ENCODE measurements at regions of chr16 and their contacts with region 1.

Region 1: GRCh38 chr16:21554795-21555585 is 44.4 kb upstream of the METTL9 start:
- DNase-seq: peak; percentile 68 to 93
- H3K4me3 ChIP-seq: peak overlapping the region; percentile 36; the same call in 1 of the 2 replicates
- H3K27ac ChIP-seq: no peak overlapping the region
- H3K4me1 ChIP-seq: 0 out of 2 replicates have a peak, but pooled peaks cover 3% of the 10 kb centered on the region
- H3K27me3 ChIP-seq: no peaks in the 10 kb centered on the region
- CTCF ChIP-seq: peak; percentile 99

Region 2: GRCh38 chr16:20611975-20612481 is 943.0 kb before region 1 on chr16:
- CTCF ChIA-PET with region 1: no interaction called
- POLR2A ChIA-PET with region 1: no interaction called
- intact Hi-C with region 1: no loop called
- DNase-seq: no peak
- H3K4me3 ChIP-seq: no peak overlapping the region
- H3K27ac ChIP-seq: no peak overlapping the region
- H3K4me1 ChIP-seq: no peaks in the 10 kb centered on the region
- H3K27me3 ChIP-seq: peaks cover 50% of the 10 kb centered on the region
- CTCF ChIP-seq: no peak

Region 3: DNA sequence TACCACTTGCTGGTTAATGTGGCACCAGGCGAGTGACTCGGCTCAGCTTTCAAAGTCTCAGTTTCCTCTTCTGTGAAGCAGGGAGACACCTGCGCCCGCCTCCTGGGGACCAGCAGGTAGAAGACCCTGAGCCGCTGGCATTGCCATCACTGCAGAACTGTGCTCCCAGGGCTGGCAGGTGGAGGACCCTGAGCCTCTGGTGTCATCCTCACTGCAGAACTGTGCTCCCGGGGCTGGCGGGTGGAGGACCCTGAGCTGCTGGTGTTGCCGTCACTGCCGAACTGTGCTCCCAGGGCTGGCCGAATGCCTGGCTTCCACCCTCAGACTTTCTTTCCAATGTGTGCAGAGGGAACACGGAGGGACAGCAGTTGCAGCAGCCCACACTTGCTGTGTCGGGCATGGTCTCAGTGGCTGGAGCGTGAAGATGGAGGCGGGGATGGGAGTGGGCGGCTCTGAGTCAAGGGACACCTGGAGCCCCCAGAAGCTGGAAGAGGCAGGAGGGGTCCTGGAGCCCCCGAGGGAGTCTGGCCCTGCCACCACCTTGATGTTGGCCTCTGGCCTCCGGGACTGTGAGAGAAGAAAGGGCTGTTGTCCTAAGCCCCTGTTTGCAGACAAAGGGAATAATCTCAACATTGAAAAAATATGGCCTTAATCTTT is 31.5 kb before region 1 on chr16:
- CTCF ChIA-PET with region 1: no interaction called
- POLR2A ChIA-PET with region 1: no interaction called
- intact Hi-C with region 1: no loop called
- DNase-seq: peak in 1 of 2 experiments; percentile 32
- H3K4me3 ChIP-seq: no peak overlapping the region
- H3K27ac ChIP-seq: no peak overlapping the region
- H3K4me1 ChIP-seq: peaks cover 22% of the 10 kb centered on the region
- H3K27me3 ChIP-seq: no peaks in the 10 kb centered on the region
- CTCF ChIP-seq: no peak

Region 4: DNA sequence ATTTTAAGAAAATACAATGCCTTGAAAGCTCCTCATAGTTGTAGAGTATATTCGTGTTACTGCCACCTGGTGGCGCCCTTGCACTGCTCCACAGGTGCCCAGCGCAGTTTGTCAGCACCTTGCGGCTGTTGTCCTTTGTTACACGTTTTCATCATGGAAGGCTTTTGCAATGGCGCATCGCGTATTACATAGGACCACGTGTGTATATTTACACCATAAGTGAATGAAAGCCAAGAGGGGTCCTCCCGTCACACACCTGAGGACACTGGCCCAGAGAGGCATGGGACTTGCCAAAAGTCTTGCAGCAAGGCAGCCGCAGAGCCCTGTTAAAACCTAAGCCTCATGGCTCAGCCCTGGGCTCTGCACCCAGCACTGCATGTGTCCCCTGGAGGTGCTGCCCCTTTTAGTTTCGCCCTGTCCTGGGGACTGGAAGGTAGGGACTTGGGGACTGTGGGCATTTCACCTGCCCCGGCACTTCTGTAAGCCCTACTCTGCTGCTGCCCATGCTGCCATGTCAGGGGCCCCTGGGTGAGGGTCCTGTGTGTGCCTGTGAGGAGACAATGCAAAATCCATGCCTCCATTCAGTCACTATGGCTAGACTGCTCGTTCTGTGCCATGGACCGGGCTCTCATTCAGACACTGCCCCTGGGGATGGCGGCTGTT is 766.5 kb after region 1 on chr16:
- CTCF ChIA-PET with region 1: no interaction called
- POLR2A ChIA-PET with region 1: no interaction called
- intact Hi-C with region 1: loop called (anchors 5 kb)
- DNase-seq: peak; percentile 54 to 59
- H3K4me3 ChIP-seq: no peak overlapping the region
- H3K27ac ChIP-seq: no peak overlapping the region
- H3K4me1 ChIP-seq: no peaks in the 10 kb centered on the region
- H3K27me3 ChIP-seq: no peaks in the 10 kb centered on the region
- CTCF ChIP-seq: peak; percentile 94

Measured in PC-9 (cell line).